Stomach (tissue), 19 donors: ENCODE measurements at regions of chr13 and their contacts with region 1.

Region 1: GRCh38 chr13:51583875-51584730 is at the start of gene WDFY2:
- DNase-seq: peak; percentile 99 to 100
- H3K4me3 ChIP-seq: peak within 1 kb of the TSS; percentile 77 to 95 (median 90)
- H3K27ac ChIP-seq: peak within 1 kb of the TSS; percentile 90 to 96 (median 94)
- H3K4me1 ChIP-seq: peaks cover 9 to 43% (median 34%) of the 10 kb centered on the region in 4 donors
- H3K27me3 ChIP-seq: no peaks in the 10 kb centered on the region
- CTCF ChIP-seq: peak in 2 of 7 experiments; percentile 8 to 41
- EP300 ChIP-seq: no peak
- POLR2A ChIP-seq: peak in 2 of 4 donors; percentile 73 to 81
- total RNA-seq, gene WDFY2: 1.4 to 22.6 (median 19.8) TPM

Region 2: DNA sequence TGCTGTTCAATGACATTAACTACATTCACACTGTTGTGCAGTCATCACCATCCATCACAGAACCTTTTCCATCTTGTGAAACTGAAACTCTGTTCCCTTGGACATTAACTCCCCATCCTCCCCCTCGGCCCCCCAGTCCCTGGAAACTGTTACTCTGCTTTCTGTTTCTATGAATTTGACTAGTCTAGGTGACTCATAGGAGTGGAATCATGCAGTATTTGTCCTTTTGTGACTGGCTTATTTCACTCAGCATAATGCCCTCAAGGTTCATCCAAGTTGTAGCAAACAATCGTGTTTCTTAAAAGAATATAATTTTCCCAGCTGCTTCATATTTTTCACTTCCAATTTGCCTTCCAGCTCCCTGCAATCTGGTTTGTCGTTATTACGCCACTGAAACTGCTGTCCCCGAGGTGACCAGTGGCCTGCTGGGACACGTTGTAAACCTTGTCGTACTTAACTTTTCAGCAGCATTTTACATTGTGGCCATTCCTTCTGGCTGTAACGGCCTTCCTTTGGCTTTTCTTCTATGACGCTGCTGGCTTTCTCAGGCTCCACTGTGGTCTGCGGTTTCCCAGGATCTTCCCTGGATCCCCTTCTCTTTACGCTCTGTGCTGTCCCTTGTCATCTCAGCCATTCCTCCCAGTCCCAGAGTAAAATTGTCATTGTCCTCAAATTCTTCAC is 145.9 kb after region 1 on chr13:
- intact Hi-C with region 1: loop called (anchors 10 kb)
- DNase-seq: peak in 1 of 2 donors; percentile 78
- H3K4me3 ChIP-seq: no peak overlapping the region
- H3K27ac ChIP-seq: peak overlapping the region; percentile 34 to 75 (median 66)
- H3K4me1 ChIP-seq: peaks cover 20 to 78% (median 43%) of the 10 kb centered on the region in 4 donors
- H3K27me3 ChIP-seq: no peaks in the 10 kb centered on the region
- CTCF ChIP-seq: no peak
- EP300 ChIP-seq: no peak
- POLR2A ChIP-seq: no peak